ENCODE measurements at regions of chr14 and their contacts with region 1.

Region 1: DNA sequence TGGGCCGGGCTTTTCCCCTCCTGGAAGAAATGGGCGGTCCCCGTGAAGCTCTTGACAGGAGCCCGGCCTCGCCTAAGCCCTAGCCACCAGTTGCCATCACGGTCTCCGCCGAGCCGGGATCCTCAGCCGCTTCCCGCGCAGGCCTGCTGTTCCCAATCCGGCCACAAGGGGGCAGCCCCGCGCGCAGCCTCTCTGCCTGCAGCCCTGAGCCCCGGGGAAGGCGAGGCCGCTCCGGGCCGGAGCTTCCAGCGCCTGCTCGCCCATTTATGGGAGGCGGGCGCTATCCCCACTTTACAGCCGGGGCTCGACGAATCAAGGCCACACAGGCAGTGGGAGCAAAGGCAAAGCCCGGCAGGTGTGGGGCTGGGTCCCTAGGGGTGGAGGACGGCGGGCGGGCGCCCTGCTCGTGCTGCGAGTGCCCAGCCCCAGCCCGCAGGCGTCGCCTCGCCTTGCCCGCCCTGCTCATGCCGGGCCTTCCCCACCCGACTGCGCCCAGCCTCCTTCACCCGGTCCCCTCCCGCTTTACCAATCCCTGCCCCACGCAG is 61.5 kb downstream of the LGMN start:
- DNase-seq: peak; percentile 85 to 95
- ATAC-seq: peak; percentile 93
- H3K4me3 ChIP-seq: no peak overlapping the region
- H3K27ac ChIP-seq: no peak overlapping the region
- H3K4me1 ChIP-seq: no peaks in the 10 kb centered on the region
- H3K27me3 ChIP-seq: no peaks in the 10 kb centered on the region

Region 2: GRCh38 chr14:92121670-92122350 is 565.2 kb before region 1 on chr14 and contains the starts of genes CPSF2 and NDUFB1:
- intact Hi-C with region 1: loop called in 1 of 2 experiments (anchors 10 kb)
- DNase-seq: peak; percentile 90 to 95
- ATAC-seq: peak; percentile 96
- H3K4me3 ChIP-seq: peak within 1 kb of the TSS; percentile 71 to 82
- H3K27ac ChIP-seq: peak within 1 kb of the TSS in 1 of 2 donors; percentile 87
- H3K4me1 ChIP-seq: peaks cover 0 to 1% of the 10 kb centered on the region in 2 donors
- H3K27me3 ChIP-seq: no peaks in the 10 kb centered on the region
- total RNA-seq, gene CPSF2: 38.6 to 42.4 TPM
- total RNA-seq, gene NDUFB1: 88.7 to 90.5 TPM